AG04450 (cell line): ENCODE measurements at regions of chr10 and their contacts with region 1.

Region 1: DNA sequence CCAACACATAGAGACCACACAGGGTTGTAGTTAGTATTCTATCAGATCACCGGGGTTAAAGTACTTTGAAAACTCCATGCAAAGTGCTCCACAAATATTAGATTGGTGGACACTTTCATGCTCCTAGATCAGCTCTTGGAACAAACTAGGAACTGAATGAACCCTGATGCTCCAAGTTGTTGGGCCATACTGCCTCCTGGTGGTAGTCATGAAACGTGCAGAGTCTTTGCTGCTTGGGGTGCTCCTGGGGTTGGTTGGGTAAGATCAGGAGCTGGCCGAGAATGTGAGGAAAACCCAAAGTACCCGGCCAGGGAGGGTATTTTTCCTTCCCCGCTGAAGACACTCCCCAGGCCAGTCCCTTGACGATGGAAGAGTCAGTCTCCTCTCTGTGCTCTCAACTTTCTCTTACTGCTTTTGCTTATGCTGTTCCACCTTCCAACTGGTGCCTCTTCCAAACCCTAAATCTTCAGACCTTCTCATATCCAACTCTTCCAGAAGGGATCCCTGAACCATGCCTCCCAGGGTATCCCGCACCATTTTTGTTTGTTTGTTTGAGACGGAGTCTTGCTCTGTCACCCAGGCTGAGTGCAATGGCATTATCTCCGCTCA is 920 bp upstream of the RPEL1 start:
- DNase-seq: peak; percentile 66
- H3K4me3 ChIP-seq: no peak overlapping the region
- H3K27ac ChIP-seq: no peak overlapping the region
- H3K27me3 ChIP-seq: peaks cover 2% of the 10 kb centered on the region
- CTCF ChIP-seq: peak; percentile 93

Region 2: GRCh38 chr10:102917962-102918816 is 326.6 kb before region 1 on chr10 and contains the start of gene CNNM2:
- CTCF ChIA-PET with region 1: interaction called, 31 read pairs
- POLR2A ChIA-PET with region 1: interaction called, 3 read pairs
- DNase-seq: peak; percentile 100
- H3K4me3 ChIP-seq: peak within 1 kb of the TSS; percentile 96
- H3K27ac ChIP-seq: peak within 1 kb of the TSS; percentile 93
- H3K27me3 ChIP-seq: no peaks in the 10 kb centered on the region
- CTCF ChIP-seq: no peak; the same call in 1 of the 2 replicates
- polyA plus RNA-seq, gene CNNM2: 5.2 and 5.8 TPM in 2 replicates

Region 3: GRCh38 chr10:103102195-103102594 is 142.6 kb before region 1 on chr10:
- CTCF ChIA-PET with region 1: interaction called, 27 read pairs
- POLR2A ChIA-PET with region 1: no interaction called
- DNase-seq: no peak
- H3K4me3 ChIP-seq: no peak overlapping the region
- H3K27ac ChIP-seq: no peak overlapping the region
- H3K27me3 ChIP-seq: no peaks in the 10 kb centered on the region
- CTCF ChIP-seq: no peak

Region 4: DNA sequence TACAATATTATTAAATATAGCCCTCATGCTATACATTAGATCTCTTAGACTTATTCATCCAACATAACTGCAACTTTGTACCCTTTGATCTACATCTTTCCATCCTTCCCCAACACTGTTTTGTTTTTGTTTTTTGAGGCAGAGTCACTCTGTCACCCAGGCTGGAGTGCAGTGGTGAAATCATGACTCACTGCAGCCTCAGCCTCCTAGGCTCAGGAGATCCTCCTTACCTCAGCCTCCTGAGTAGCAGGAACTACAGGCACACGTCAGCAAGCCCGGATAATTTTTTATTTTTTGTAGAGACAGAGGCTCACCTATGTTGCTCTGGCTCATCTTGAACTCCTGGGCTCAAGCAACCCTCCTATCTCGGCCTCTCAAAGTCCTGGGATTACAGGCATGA is 105.0 kb before region 1 on chr10:
- CTCF ChIA-PET with region 1: interaction called, 19 read pairs
- POLR2A ChIA-PET with region 1: no interaction called
- DNase-seq: no peak
- H3K4me3 ChIP-seq: no peak overlapping the region
- H3K27ac ChIP-seq: no peak overlapping the region
- H3K27me3 ChIP-seq: no peaks in the 10 kb centered on the region
- CTCF ChIP-seq: no peak

Region 5: DNA sequence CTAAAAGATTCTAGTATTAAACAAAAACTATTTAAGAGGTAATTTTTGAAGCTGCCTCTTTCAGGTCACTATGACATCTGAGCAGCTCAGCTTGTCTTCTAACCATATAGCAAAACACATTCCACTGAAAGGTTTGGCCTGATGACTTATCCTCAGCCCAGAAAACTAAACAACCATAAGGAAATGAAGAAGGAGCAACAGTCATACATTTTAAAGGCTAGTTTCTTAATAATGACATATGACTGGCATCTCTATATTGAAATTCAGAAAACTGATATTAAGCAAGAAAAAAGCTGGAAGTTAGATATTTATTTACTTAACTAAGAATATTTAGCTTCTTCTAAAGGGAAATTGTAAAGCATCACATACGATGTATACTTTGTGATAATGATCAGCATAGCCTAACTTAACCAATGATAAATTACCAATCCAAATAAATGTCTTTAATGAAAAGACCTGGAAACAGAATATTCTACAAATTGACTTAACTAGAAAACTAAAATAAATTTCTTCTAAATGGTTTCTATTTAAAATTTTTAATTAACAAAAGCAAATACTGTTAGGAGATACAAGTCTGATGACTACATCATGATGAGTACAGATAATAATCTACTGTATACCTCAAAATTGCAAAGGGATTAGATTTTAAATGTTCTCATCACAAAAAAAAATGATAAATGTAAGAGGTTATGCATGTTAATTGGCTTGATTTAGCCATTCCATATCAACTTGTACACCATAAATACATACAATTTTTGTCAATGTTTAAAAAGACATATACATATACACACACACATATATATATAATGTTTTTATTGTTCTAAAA is 76.1 kb before region 1 on chr10:
- CTCF ChIA-PET with region 1: interaction called, 15 read pairs
- POLR2A ChIA-PET with region 1: no interaction called
- DNase-seq: no peak
- H3K4me3 ChIP-seq: no peak overlapping the region
- H3K27ac ChIP-seq: peak overlapping the region; percentile 0
- H3K27me3 ChIP-seq: no peaks in the 10 kb centered on the region
- CTCF ChIP-seq: no peak

Region 6: DNA sequence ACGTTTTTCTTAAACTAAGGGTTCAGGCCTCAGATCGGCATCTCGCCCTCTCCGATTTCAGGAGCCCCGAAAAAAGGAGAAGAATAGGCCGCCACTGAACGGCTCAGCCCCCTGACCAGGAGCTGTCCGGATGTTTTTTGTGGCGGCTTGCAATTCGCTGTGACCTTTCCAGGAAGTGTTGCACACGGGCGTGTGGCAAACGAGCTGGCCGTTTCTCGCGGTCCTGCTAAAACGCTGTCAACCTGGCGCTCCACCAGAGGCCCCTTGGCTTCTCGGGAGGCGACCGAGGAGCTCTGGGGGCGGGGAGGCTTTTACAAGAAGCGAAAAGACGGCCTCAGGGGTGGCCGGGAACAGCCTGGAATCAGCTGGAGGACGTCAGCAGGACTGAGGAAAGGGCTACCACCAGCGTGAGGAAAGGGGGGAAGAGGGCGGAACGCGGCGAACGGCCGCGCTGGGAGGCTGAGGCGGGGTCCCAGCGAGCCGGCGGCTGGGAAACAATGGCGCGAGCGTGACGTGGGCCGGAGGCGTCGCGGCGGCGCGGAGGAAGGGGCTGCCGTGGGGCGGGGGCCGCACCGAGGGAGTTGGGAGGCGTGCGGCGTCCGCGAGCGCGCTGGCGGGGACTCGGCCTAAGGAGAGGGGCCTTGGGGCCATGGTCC is 52.2 kb before region 1 on chr10:
- CTCF ChIA-PET with region 1: interaction called, 28 read pairs
- POLR2A ChIA-PET with region 1: interaction called, 12 read pairs
- DNase-seq: peak; percentile 15
- H3K4me3 ChIP-seq: peak overlapping the region; percentile 83
- H3K27ac ChIP-seq: peak overlapping the region; percentile 92
- H3K27me3 ChIP-seq: no peaks in the 10 kb centered on the region
- CTCF ChIP-seq: no peak

Region 7: GRCh38 chr10:103333925-103334520 is 89.3 kb after region 1 on chr10:
- CTCF ChIA-PET with region 1: interaction called, 10 read pairs
- POLR2A ChIA-PET with region 1: no interaction called
- DNase-seq: no peak
- H3K4me3 ChIP-seq: no peak overlapping the region
- H3K27ac ChIP-seq: no peak overlapping the region
- H3K27me3 ChIP-seq: no peaks in the 10 kb centered on the region
- CTCF ChIP-seq: peak; percentile 65

Region 8: DNA sequence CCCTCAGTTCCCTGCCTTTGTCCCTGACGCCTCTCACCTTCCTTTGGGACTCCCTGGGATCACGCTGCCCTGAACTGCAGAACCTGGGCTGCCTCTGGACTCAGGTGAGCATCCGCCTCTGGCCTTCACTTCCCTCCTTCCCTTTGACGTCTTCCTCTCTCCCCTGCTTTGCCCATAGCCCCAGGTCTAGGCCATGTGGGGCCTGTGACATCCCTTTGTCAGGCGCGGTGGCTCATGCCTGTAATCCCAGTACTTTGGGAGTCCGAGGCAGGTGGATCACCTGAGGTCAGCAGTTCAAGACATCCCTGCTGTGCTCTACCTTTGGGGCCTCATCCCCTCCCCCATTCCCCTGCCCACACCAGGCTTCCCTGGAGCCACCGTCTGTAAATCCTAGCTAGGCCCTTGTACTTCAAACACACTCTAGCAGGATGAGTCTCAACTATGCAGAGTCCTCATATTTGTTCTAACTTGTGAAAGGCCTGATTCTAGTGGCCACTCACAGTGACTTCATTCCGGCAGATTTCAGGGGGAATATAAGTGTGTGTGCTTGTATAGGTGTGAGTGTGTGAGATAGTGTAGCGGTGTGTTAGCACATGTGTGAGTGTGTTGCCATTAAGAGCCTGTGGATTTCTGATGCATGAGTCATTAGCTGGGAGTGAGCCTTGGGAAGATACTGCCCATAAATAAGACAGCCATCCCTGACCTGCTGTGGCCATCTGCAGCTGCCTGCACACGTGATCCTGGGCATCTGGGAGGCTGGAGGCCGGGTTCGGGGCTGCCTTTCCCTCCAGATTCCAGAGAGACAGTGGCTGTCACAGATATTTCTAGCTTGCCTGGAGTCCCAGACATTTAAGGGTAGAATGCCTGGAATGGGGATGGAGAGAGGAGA is 247.0 kb after region 1 on chr10:
- CTCF ChIA-PET with region 1: no interaction called
- POLR2A ChIA-PET with region 1: no interaction called
- DNase-seq: peak; percentile 92
- H3K4me3 ChIP-seq: no peak overlapping the region
- H3K27ac ChIP-seq: no peak overlapping the region
- H3K27me3 ChIP-seq: peaks cover 39% of the 10 kb centered on the region
- CTCF ChIP-seq: no peak